ENCODE measurements at regions of chr5 and their contacts with region 1.

Region 1: DNA sequence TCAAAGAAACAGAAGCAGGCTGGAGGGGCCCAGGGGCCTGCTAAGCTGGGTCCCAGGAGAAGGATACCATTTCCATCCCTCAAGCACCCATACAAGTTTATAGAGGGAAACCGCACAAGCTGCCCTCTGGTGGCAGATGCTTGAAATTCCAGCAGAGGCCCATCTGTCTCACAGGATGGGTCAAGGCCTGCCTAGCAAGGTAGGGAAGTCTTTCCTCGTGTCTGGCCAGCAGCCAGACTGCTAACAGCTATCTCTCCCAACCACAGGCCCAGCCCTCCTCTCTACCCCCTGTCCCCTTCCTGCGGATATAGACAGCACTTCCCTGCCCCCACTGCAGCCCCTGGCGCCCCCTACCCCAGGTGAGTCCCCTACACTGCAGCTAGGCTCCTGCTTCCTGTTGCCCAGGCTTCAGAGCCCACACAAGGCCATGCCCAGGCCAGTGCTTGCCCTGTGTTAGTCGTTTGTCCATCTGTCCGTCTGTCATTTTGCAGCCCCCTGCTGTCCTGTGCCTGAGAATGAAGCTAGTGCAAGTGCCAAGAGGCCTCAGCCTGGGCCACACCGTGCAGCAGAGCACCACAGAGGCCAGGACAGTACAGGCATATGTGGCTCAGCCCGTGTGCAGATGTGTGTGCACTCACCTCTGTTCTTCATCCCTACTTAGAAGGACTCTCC is 26.2 kb downstream of the TCF7 start:
- DNase-seq: peak; percentile 67
- H3K4me3 Mint-ChIP-seq: no peak overlapping the region
- H3K27ac Mint-ChIP-seq: peak overlapping the region; percentile 79
- H3K4me1 Mint-ChIP-seq: peaks cover 71% of the 10 kb centered on the region
- H3K27me3 Mint-ChIP-seq: no peaks in the 10 kb centered on the region

Region 2: DNA sequence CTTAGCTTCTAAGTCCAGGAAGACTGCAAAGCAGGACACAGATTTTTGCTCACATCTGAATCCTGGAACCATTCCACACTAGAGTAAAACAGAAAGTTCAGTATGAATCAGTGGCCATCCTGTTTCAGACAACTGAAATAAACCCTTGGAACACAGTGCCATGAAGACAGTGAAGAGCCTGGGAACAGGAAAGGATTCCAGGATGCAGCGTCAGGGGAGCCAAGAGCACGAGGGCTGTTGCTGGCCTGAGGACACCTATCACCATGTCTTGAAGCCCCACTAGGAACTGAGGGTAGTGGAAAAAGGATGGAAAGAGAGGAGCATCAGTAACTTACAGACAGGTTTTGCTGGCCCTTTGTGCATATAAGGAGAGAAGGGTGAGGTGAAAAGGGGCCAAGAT is 413.0 kb before region 1 on chr5:
- CTCF ChIA-PET with region 1: no interaction called
- POLR2A ChIA-PET with region 1: no interaction called
- DNase-seq: no peak
- H3K4me3 Mint-ChIP-seq: no peak overlapping the region
- H3K27ac Mint-ChIP-seq: no peak overlapping the region
- H3K4me1 Mint-ChIP-seq: no peaks in the 10 kb centered on the region
- H3K27me3 Mint-ChIP-seq: peaks cover 11% of the 10 kb centered on the region

Region 3: DNA sequence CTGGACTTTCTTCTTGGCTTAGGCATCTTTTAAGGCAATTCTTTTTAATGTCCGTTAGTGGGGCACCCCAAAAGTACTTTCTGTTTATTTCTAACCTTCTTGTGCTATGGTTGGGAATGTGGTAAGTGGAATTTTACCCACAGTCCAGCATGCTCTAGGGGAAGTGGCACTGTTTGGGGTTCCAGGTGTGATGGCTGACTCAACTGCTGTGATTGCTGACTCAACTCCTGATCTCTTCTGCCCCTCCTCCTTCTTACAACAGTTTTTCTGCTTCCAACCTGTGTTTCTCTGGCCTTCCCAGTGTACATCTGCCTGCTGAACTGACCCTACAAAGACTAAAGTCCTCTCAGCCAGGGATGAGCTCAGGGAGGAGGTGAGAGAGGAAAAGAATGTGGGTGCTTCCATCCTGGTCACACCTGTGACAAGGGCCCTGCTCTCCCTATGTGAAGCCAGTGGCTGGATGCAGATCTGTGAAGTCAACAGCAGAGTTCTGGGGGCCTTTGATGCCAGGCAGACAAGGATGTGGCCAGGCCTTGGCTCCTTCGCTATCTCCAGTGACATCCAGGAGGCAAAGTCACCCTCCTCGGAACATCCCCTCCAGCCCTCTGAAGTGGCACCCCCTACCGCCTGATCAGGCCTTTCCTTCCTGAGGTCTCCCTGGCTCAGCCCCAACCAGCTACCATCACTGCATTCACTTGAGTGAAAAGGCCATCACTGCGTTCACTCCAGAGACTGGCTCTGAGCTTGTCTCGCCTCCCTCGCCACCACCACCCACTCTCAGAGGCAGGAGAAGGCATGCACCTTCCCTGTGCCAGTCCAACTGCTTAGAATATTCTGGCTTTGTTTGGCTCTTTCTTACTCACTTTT is 244.5 kb before region 1 on chr5:
- CTCF ChIA-PET with region 1: no interaction called
- POLR2A ChIA-PET with region 1: no interaction called
- DNase-seq: no peak
- H3K4me3 Mint-ChIP-seq: no peak overlapping the region
- H3K27ac Mint-ChIP-seq: no peak overlapping the region
- H3K4me1 Mint-ChIP-seq: no peaks in the 10 kb centered on the region
- H3K27me3 Mint-ChIP-seq: peaks cover 2% of the 10 kb centered on the region

Region 4: GRCh38 chr5:133993231-133993949 is 147.3 kb before region 1 on chr5:
- CTCF ChIA-PET with region 1: no interaction called
- POLR2A ChIA-PET with region 1: no interaction called
- DNase-seq: no peak
- H3K4me3 Mint-ChIP-seq: no peak overlapping the region
- H3K27ac Mint-ChIP-seq: peak overlapping the region; percentile 47
- H3K4me1 Mint-ChIP-seq: peaks cover 39% of the 10 kb centered on the region
- H3K27me3 Mint-ChIP-seq: no peaks in the 10 kb centered on the region

Region 5: DNA sequence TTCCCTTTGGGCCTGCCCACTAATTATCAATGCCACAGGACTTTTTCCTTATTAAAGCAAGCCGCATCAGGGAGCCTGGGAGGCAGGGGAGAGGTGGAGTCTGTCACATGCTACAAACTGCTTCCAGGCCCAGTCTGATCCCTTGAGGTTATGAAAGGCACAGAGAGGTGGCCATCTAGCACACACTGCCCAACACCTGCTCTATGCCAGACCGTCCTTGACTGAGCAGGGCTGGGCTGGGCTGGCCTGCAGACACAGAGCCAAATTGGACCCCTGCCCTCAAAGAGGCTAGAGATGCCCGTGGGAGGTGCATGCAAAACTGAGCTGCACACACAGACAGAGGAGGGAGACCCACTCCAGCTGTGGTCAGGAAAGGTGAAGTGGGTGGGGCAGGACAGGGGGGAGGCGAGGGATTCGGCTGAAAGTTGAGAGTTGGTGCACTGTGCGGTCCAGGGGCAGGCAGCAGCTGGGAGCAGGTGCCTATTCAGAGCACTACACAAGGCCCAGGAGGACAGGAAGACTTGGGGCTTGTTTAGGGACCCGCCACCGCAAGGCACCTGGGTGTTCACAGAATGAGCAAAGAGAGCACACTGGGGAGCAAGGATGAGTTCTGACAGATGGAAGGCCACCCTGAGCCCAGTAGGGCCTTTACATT is 62.6 kb before region 1 on chr5:
- CTCF ChIA-PET with region 1: interaction called, 12 read pairs
- POLR2A ChIA-PET with region 1: no interaction called
- DNase-seq: peak; percentile 39
- H3K4me3 Mint-ChIP-seq: no peak overlapping the region
- H3K27ac Mint-ChIP-seq: peak overlapping the region; percentile 94
- H3K4me1 Mint-ChIP-seq: peaks cover 66% of the 10 kb centered on the region
- H3K27me3 Mint-ChIP-seq: no peaks in the 10 kb centered on the region

Region 6: DNA sequence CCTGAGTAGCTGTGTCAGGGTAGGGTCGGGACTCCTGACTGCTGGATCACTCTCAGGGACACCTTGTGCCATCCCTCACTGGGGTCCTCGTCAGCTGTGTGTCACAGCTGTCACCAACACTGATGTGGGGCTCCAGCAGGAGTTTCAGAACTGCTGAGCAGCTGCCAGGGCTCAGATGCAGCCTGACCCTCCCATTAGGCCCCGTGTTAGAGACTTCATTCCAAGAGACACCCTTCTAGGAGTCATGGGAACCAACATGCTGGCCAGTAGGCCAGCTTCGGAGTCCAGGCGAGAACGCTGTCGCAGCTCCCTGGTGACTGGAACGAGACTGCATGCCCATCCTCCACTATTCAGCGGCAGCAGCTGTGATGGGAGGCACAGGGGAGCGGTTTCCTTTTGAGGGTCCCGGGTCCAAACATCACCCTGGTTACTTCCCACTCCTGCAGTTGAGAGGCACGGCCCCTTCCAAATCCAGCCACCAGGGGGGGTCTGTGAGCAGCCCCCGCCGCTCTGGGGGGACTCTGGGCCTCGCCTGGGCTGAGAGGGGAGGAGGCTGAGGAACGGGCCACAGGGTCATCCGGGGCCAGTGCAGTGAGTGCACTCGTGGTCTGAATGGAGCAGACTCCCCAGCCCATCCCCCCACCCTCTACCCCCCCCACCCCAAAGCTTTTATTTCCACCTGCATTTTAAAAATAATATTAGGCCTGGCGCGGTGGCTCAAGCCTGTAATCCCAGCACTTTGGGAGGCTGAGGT is 38.8 kb before region 1 on chr5:
- CTCF ChIA-PET with region 1: interaction called, 26 read pairs
- POLR2A ChIA-PET with region 1: no interaction called
- DNase-seq: peak; percentile 67
- H3K4me3 Mint-ChIP-seq: no peak overlapping the region
- H3K27ac Mint-ChIP-seq: peak overlapping the region; percentile 46
- H3K4me1 Mint-ChIP-seq: peaks cover 90% of the 10 kb centered on the region
- H3K27me3 Mint-ChIP-seq: peaks cover 1% of the 10 kb centered on the region

Region 7: DNA sequence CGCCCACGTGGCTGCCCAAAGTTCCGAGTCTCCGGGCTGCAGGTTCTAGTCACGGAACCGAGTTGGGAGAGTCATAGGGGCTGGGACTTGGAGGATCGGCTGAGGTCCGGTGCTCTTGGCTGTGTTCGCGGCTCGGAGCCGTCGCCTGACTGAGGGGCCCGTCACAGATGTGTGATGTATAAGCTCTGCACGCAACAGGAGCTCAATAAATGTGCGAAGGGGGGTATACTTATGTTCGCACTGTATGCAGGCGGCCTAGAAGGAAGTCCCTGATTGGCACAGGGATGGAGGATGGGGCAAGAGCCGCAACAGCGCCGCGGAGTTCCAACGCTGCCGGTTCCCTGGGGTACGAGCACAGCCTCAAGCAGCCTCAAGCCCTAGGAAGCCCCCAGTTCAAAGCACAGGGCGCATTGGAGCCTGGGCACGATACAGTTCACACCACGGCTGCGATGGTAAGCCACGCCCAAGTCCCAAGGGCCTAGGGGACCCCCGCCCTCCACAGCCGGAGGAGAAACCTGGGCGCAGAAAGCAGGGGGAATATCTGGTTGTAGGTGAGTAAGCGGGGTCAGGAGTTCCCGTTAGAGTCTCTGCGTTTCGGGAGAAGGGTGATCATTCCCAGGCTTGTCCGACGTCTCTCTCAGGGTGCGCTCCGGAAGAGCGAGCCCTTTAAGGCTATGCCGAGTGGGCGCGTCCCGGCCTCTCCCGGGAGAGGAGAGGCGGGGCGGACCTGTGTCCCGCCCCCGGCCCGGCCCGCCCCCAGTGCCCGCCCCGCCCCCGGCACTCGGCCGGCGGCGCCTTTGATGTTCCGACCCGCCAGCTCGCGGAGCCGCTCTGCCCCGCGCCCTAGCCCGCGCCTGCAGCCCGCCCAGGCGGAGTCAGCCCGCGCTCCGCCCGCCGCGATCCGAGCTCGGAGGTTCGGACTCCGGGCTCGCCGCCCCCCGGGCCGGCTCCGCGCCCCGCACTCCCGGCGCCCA is 26.5 kb before region 1 on chr5 and contains the start of gene TCF7:
- CTCF ChIA-PET with region 1: interaction called, 25 read pairs
- POLR2A ChIA-PET with region 1: interaction called, 3 read pairs
- DNase-seq: peak; percentile 77
- H3K4me3 Mint-ChIP-seq: peak within 1 kb of the TSS; percentile 82
- H3K27ac Mint-ChIP-seq: peak within 1 kb of the TSS; percentile 95
- H3K4me1 Mint-ChIP-seq: peaks cover 66% of the 10 kb centered on the region
- H3K27me3 Mint-ChIP-seq: peaks cover 8% of the 10 kb centered on the region
- total RNA-seq, gene TCF7: 271 to 283 TPM

Region 8: DNA sequence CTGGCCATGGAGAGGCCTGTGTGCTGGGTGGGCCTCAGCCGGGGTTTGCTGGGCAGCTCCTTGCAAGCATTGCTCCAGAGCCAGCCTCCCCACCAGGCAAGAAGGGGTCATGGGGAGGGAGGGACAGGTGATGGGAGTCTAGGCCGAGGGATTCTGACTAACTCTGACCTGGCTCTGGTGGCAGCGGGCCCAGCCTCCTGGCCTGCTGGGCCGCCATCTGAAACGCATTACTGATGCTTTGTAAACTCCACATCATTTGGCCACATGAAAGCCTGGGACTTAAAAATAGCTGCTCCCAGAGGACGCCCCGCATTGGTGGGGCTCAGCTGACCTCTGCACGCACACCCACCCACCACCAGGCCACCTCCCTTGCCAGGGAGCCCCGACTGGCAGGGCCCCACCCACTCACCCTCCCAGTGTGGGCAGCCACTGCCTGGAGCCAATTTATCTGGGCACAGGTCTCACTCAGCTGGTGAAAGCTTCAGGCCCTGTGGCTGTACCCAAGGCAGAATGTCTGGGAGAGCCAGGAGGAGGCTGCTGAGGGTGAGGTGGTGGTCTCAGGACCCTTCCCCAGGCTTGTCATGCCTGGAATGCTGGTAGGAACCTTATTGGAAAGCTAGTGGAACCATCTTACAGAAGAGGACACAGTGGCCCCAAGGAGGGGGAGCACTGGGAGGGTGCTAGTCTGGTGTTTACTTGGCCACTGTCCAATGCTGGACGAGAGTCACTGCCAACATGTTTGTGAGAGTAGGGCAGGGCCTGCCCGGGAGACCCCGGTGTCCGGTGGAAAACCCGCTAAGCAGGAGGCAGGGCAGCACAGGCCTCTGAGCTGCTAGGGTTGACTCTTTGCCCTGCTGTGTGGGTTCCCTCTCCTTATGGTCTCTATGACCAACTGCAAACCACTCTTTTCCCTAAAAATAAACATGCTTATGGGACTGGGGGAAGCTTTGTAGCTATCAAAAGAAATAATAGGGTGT is 15.3 kb before region 1 on chr5:
- CTCF ChIA-PET with region 1: interaction called, 99 read pairs
- POLR2A ChIA-PET with region 1: interaction called, 8 read pairs
- DNase-seq: no peak
- H3K4me3 Mint-ChIP-seq: peak overlapping the region; percentile 79
- H3K27ac Mint-ChIP-seq: peak overlapping the region; percentile 94
- H3K4me1 Mint-ChIP-seq: peaks cover 98% of the 10 kb centered on the region
- H3K27me3 Mint-ChIP-seq: peaks cover 1% of the 10 kb centered on the region

Region 9: GRCh38 chr5:134153657-134154056 is 13.0 kb after region 1 on chr5:
- CTCF ChIA-PET with region 1: interaction called, 26 read pairs
- POLR2A ChIA-PET with region 1: no interaction called
- DNase-seq: no peak
- H3K4me3 Mint-ChIP-seq: no peak overlapping the region
- H3K27ac Mint-ChIP-seq: no peak overlapping the region
- H3K4me1 Mint-ChIP-seq: peaks cover 39% of the 10 kb centered on the region
- H3K27me3 Mint-ChIP-seq: no peaks in the 10 kb centered on the region